ENCODE measurements at regions of chr6 and their contacts with region 1.

Region 1: GRCh38 chr6:11653028-11653583 is 115.6 kb downstream of the TMEM170B start:
- DNase-seq: peak; percentile 97
- ATAC-seq: peak; percentile 61
- H3K4me3 ChIP-seq: no peak overlapping the region
- H3K27ac ChIP-seq: peak overlapping the region; percentile 63
- H3K4me1 ChIP-seq: peaks cover 36% of the 10 kb centered on the region
- H3K27me3 ChIP-seq: no peaks in the 10 kb centered on the region
- CTCF ChIP-seq: no peak
- POLR2A ChIP-seq: no peak
- RAD21 ChIP-seq: no peak

Region 2: GRCh38 chr6:11609315-11610071 is 43.6 kb before region 1 on chr6:
- CTCF ChIA-PET with region 1: interaction called, 4 read pairs
- POLR2A ChIA-PET with region 1: no interaction called
- dilution Hi-C with region 1: no loop called
- in situ Hi-C with region 1: no loop called
- intact Hi-C with region 1: loop called (anchors 2 kb)
- DNase-seq: peak; percentile 85
- ATAC-seq: peak; percentile 78
- H3K4me3 ChIP-seq: no peak overlapping the region
- H3K27ac ChIP-seq: peak overlapping the region; percentile 95
- H3K4me1 ChIP-seq: peaks cover 25% of the 10 kb centered on the region
- H3K27me3 ChIP-seq: no peaks in the 10 kb centered on the region
- CTCF ChIP-seq: no peak
- POLR2A ChIP-seq: no peak
- RAD21 ChIP-seq: no peak

Region 3: GRCh38 chr6:11770546-11771466 is 117.7 kb after region 1 on chr6:
- CTCF ChIA-PET with region 1: interaction called, 4 read pairs
- POLR2A ChIA-PET with region 1: no interaction called
- dilution Hi-C with region 1: no loop called
- in situ Hi-C with region 1: no loop called
- intact Hi-C with region 1: loop called (anchors 1 kb)
- DNase-seq: peak; percentile 100
- ATAC-seq: peak; percentile 81
- H3K4me3 ChIP-seq: no peak overlapping the region
- H3K27ac ChIP-seq: peak overlapping the region; percentile 81
- H3K4me1 ChIP-seq: peaks cover 36% of the 10 kb centered on the region
- H3K27me3 ChIP-seq: no peaks in the 10 kb centered on the region
- CTCF ChIP-seq: no peak
- POLR2A ChIP-seq: peak; percentile 74; the same call in 1 of the 2 replicates
- RAD21 ChIP-seq: no peak; the same call in none of the 2 replicates

Region 4: DNA sequence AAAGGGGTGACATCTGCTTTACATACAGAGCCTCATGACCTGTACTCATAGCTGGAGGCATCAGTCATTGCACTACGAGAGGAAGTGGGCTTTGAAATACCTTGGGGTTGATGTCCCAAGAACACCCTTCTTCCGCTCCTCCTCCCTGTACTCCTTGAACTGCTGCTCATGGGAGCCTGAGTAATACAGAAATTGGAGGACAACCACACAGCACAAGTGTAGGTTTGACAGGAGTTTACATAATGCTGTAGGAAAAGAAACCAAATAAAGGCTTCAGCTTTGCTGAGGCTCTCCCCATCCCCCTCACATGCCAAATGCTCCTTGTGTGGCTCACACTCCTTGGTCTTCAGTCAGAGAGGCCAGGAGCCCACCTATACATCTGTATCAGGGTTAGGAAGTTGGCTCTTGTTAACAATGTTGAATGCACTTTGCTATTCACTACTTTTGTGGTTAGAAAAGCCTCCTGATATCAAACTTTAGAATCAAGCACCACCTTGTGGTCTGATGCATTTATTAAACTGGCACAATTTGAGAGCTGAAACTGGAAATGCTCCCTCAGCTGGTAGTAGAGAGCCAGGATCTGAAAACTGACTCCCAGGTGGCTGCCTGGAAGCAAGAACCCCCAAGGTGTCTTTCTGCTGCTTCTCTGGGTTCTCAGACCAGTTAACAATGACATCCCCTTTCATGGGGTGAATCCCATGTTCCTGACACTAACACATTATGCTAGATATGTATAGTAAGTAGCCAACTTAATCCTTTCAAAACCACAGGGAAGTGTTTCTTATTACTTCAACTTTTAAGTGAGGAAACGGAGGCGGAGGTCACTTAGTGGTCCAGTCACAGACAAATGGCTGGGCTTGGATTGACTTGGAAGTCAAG is 580.8 kb after region 1 on chr6:
- CTCF ChIA-PET with region 1: interaction called, 4 read pairs
- POLR2A ChIA-PET with region 1: no interaction called
- dilution Hi-C with region 1: no loop called
- in situ Hi-C with region 1: loop called (anchors 5 kb)
- intact Hi-C with region 1: loop called (anchors 1 kb)
- DNase-seq: peak; percentile 84
- ATAC-seq: peak; percentile 90
- H3K4me3 ChIP-seq: no peak overlapping the region
- H3K27ac ChIP-seq: no peak overlapping the region
- H3K4me1 ChIP-seq: peaks cover 4% of the 10 kb centered on the region
- H3K27me3 ChIP-seq: no peaks in the 10 kb centered on the region
- CTCF ChIP-seq: peak; percentile 98
- POLR2A ChIP-seq: no peak
- RAD21 ChIP-seq: peak; percentile 88

Region 5: GRCh38 chr6:12595161-12595811 is 942.2 kb after region 1 on chr6:
- CTCF ChIA-PET with region 1: no interaction called
- POLR2A ChIA-PET with region 1: no interaction called
- dilution Hi-C with region 1: no loop called
- in situ Hi-C with region 1: loop called (anchors 10 kb)
- intact Hi-C with region 1: no loop called
- DNase-seq: peak; percentile 52
- ATAC-seq: peak; percentile 32; the same call in 1 of the 2 replicates
- H3K4me3 ChIP-seq: no peak overlapping the region
- H3K27ac ChIP-seq: no peak overlapping the region
- H3K4me1 ChIP-seq: peaks cover 5% of the 10 kb centered on the region
- H3K27me3 ChIP-seq: no peaks in the 10 kb centered on the region
- CTCF ChIP-seq: no peak
- POLR2A ChIP-seq: no peak
- RAD21 ChIP-seq: no peak

Measured in IMR-90 (cell line).